PC-9 (cell line): ENCODE measurements at regions of chr19 and their contacts with region 1.

Region 1: DNA sequence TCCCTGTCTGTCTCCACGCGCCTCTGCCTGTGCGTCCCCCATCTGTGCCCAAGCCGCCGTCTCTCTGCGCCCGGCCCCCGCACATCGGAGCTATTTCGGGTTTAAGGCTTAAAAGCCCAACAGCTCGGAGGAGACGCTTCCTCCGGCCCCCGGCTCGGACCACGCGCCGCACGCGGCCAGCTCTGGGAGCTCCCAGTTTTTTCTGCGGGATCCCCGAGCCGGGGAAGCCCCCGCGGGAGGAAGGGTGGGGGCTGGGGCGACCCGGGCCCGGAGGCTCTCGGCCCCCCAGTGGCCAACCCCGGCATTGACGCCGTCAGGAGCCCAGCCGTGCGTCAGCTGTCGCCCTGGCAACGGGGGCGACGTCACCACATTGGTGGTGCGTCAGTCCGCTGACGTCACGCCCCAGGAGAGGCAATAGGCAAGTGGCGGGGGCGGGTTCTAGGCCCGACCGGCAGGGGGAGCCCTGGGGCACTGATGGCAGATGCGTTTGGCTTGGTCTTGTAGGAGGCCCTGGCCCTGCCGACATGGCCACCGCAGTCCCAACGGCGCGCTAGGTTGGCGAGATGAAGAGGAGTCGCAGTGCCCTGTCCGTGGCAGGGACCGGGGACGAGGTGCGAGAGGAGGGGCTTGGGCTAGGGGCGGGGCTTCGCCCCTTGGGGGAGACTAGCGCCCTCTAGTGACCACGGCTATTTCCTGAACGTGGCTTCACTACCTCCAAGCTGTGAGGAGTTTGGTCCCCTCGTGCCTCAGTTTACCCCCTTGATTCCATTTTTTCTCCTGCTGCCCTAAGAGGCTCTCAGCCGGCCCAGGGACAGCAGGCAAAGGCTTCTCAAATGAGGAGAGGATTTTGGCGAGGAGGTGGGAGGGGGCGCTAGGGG is 3.7 kb upstream of the PDE4A start:
- DNase-seq: peak; percentile 80 to 93
- H3K4me3 ChIP-seq: peak overlapping the region; percentile 66
- H3K27ac ChIP-seq: no peak overlapping the region
- H3K4me1 ChIP-seq: peaks cover 13% of the 10 kb centered on the region; the same call in 1 of the 2 replicates
- H3K27me3 ChIP-seq: peaks cover 45% of the 10 kb centered on the region
- CTCF ChIP-seq: peak; percentile 97

Region 2: GRCh38 chr19:10219678-10220077 is 196.9 kb before region 1 on chr19:
- CTCF ChIA-PET with region 1: no interaction called
- POLR2A ChIA-PET with region 1: no interaction called
- intact Hi-C with region 1: no loop called
- DNase-seq: peak; percentile 31 to 68
- H3K4me3 ChIP-seq: no peak overlapping the region
- H3K27ac ChIP-seq: no peak overlapping the region
- H3K4me1 ChIP-seq: peaks cover 30% of the 10 kb centered on the region
- H3K27me3 ChIP-seq: no peaks in the 10 kb centered on the region
- CTCF ChIP-seq: peak; percentile 69

Region 3: DNA sequence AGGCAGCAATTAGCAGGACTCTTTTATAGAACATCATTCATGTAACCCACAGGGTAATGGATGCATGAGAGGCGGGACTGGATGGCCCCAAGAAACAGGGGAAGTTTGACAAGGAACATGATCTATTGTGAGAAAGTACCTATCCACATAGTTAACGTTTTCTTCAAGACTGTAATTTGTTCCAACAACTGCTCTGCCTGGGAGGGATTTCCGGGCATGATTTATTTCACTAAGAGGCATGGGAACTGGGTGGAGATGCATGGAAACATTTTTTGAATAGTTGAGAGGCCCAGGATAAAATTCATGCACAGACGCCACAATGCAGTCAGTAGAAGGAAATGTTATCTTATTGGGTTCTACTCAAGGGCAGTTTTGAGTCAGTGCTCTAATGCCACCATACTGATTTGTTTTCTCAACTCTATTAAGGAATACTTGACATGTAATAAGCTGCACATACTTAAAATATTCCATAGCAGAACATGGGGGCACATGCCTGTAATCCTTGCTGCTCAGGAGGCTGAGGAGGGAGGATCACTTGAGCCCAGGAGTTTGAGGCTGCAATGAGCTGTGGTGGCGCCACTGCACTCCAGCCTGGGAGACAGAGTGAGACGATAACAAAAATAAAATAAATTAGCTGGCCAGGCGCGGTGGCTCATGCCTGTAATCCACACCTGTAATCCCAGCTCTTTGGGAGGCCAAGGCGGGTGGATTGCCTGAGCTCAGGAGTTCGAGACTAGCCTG is 117.2 kb after region 1 on chr19:
- CTCF ChIA-PET with region 1: interaction called, 11 read pairs
- POLR2A ChIA-PET with region 1: no interaction called
- intact Hi-C with region 1: no loop called
- DNase-seq: peak in 1 of 2 experiments; percentile 69
- H3K4me3 ChIP-seq: no peak overlapping the region
- H3K27ac ChIP-seq: no peak overlapping the region
- H3K4me1 ChIP-seq: no peaks in the 10 kb centered on the region
- H3K27me3 ChIP-seq: no peaks in the 10 kb centered on the region
- CTCF ChIP-seq: no peak